CD4-positive, alpha-beta memory T cell (primary cell): ENCODE measurements at regions of chr10 and their contacts with region 1.

Region 1: DNA sequence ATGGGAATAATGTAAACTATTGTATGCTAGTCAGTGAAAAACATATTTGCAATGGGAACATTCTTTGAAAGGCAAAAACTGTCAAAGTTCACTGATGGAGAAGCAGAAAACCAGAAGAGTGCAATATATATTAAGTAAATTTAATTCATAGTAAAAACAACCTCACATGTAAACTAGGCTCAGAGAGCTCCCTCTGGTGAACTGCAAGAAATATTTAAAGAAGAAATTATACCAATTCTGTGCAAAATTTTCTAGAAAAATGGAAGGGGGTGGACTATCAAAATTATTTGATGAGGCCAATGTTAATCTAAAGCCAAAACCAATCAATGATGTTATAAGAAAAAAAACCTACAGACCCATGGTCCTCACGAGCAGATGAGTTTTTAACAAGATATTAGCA is 331.3 kb downstream of the WDR37 start:
- DNase-seq: no peak
- H3K4me3 ChIP-seq: no peak overlapping the region
- H3K4me3 Mint-ChIP-seq: no peak overlapping the region
- H3K27ac ChIP-seq: no peak overlapping the region
- H3K27ac Mint-ChIP-seq: no peak overlapping the region
- H3K4me1 ChIP-seq: no peaks in the 10 kb centered on the region
- H3K4me1 Mint-ChIP-seq: no peaks in the 10 kb centered on the region
- H3K27me3 ChIP-seq: no peaks in the 10 kb centered on the region
- H3K27me3 Mint-ChIP-seq: peaks cover 1 to 13% of the 10 kb centered on the region in 2 donors

Region 2: DNA sequence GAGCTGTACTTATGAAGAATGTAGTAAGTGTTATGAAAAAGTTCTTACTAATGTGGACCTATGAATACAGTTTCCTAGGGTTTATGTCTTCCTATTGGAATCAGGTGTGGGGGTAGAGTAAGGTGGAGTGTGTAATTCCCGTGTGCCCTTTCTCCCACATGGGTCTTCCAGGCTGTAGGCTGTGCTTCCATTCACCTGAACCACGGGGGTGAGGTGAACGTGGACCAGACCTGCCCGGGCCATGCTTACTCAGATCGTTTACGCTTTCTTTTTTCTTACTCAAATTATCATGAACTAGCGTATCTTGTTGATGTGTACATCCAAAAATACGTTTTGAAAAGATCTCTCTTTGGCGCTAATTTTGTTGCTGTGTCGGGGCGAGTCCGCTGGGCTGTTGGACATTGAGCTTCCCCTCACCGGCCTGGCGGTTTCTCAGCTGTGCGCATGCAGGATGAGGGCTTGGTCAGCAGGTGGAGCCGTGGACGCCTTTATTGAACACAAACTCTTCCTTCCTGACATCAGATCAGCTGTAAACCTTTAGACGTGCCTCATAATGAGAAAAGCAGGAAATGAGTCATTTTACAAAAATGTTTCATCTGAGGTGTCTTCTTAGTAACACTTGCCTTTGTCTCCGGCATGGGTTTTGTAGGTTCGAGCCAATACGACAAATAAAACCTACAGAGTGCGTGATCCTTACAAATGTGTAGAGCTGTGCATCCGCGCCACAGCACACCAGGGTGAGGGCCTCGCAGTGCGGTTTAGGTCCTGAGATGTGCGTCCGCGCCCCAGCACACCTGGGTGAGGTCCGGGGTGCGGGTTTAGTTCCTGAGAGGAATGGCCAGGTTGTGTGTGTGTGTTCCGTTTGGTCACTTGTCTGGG is 277.4 kb before region 1 on chr10:
- CTCF ChIA-PET with region 1: interaction called, 8 read pairs
- POLR2A ChIA-PET with region 1: interaction called, 3 read pairs
- intact Hi-C with region 1: loop called (anchors 1 kb)
- DNase-seq: peak; percentile 78 to 84 (median 80)
- H3K4me3 ChIP-seq: peak overlapping the region in 1 of 2 donors; percentile 20
- H3K4me3 Mint-ChIP-seq: peak overlapping the region; percentile 64 to 85 (median 72)
- H3K27ac ChIP-seq: peak overlapping the region; percentile 64
- H3K27ac Mint-ChIP-seq: peak overlapping the region; percentile 75 to 97 (median 95)
- H3K4me1 ChIP-seq: peaks cover 19% of the 10 kb centered on the region
- H3K4me1 Mint-ChIP-seq: peaks cover 18 to 31% (median 29%) of the 10 kb centered on the region in 4 donors
- H3K27me3 ChIP-seq: no peaks in the 10 kb centered on the region
- H3K27me3 Mint-ChIP-seq: no peaks in the 10 kb centered on the region